ENCODE measurements at regions of chr15 and their contacts with region 1.

Region 1: DNA sequence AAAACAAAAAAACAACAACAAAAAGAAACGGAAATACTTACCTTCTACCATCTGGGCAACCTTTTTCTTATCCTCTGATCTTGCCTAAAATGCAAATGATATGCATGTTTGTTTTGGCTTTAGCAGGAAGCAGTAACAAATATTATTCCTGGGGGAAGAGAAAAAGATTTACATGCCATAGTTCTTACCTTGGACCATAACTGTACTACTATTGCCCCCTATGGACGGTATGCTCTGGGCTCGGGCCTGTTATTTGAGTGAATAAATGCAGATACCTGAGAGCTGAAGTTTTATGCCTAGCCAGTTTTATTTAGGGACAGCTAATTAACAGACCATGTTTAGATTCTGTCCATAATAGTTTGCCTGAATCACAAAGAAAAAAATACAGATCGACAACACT is 12.6 kb upstream of the STARD5 start:
- DNase-seq: peak; percentile 36
- CTCF ChIP-seq: peak; percentile 48

Region 2: GRCh38 chr15:81286621-81287121 is 49.9 kb before region 1 on chr15:
- in situ Hi-C with region 1: loop called (anchors 10 kb)
- DNase-seq: no peak
- CTCF ChIP-seq: no peak